PC-9 (cell line): ENCODE measurements at regions of chr12 and their contacts with region 1.

Region 1: GRCh38 chr12:53603804-53604203 is 22.4 kb downstream of the ATF7 start:
- DNase-seq: no peak
- H3K4me3 ChIP-seq: no peak overlapping the region
- H3K27ac ChIP-seq: no peak overlapping the region
- H3K4me1 ChIP-seq: no peaks in the 10 kb centered on the region
- H3K27me3 ChIP-seq: no peaks in the 10 kb centered on the region
- CTCF ChIP-seq: no peak

Region 2: GRCh38 chr12:53344824-53345485 is 258.8 kb before region 1 on chr12:
- CTCF ChIA-PET with region 1: no interaction called
- POLR2A ChIA-PET with region 1: interaction called, 10 read pairs
- intact Hi-C with region 1: no loop called
- DNase-seq: peak in 1 of 2 experiments; percentile 56
- H3K4me3 ChIP-seq: peak overlapping the region; percentile 78
- H3K27ac ChIP-seq: no peak overlapping the region
- H3K4me1 ChIP-seq: no peaks in the 10 kb centered on the region
- H3K27me3 ChIP-seq: peaks cover 25% of the 10 kb centered on the region; the same call in 1 of the 2 replicates
- CTCF ChIP-seq: peak; percentile 62